Activated B cell treated with CpG ODN at 0.5 μM for 24 hours (primary cell): ENCODE measurements at regions of chr6 and their contacts with region 1.

Region 1: GRCh38 chr6:38570750-38571149 is 69.0 kb downstream of the BTBD9 start:
- DNase-seq: no peak
- ATAC-seq: no peak
- H3K4me3 Mint-ChIP-seq: no peak overlapping the region
- H3K27ac Mint-ChIP-seq: peak overlapping the region; percentile 92
- H3K4me1 Mint-ChIP-seq: peaks cover 27% of the 10 kb centered on the region
- H3K27me3 Mint-ChIP-seq: no peaks in the 10 kb centered on the region
- CTCF ChIP-seq: no peak

Region 2: DNA sequence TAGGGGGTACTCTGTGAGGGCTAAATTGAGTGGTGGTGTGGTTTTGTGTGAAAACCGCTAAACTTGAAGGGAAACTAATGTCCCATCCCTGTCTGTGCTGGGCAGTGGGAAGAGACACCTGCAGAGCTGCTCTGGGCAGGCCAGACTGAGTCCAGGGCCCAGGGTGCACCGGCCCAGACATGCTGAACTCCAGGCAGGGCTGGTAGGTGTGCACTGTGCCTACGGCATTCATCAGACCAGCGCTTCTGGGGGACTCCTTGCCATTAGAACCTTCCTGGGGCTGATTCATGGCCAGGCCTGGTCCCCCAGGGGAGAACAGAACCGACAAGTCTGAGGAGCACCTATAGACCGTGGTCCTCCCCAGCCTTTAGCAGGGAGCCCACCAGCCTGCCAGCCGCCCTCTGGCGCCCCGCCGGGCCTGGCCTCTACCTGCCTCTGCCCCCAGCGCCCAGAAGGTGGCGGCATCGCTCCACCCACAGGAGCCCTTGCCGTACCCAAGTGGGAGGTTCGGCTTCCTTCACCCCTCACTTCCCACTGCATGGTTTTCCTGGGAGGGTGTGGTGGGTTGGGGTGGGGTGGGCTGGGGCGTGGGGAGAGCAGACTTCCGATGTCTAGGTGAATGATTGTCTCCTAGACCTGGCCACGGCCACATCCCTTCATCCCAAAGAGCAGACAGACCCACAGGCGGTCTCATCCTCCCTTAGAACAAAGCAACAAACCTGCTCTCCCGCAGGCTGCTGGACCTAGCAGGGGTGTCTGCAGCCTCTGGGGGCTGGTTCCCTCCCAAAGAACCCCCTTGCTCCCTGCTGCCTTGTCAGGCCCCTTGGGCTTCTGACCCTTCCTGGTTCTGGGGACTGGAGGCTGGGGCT is 1086.6 kb before region 1 on chr6:
- CTCF ChIA-PET with region 1: interaction called, 3 read pairs
- POLR2A ChIA-PET with region 1: no interaction called
- intact Hi-C with region 1: loop called (anchors 1 kb)
- DNase-seq: peak; percentile 72
- ATAC-seq: peak; percentile 97
- H3K4me3 Mint-ChIP-seq: no peak overlapping the region
- H3K27ac Mint-ChIP-seq: no peak overlapping the region
- H3K4me1 Mint-ChIP-seq: peaks cover 3% of the 10 kb centered on the region
- H3K27me3 Mint-ChIP-seq: no peaks in the 10 kb centered on the region
- CTCF ChIP-seq: no peak

Region 3: DNA sequence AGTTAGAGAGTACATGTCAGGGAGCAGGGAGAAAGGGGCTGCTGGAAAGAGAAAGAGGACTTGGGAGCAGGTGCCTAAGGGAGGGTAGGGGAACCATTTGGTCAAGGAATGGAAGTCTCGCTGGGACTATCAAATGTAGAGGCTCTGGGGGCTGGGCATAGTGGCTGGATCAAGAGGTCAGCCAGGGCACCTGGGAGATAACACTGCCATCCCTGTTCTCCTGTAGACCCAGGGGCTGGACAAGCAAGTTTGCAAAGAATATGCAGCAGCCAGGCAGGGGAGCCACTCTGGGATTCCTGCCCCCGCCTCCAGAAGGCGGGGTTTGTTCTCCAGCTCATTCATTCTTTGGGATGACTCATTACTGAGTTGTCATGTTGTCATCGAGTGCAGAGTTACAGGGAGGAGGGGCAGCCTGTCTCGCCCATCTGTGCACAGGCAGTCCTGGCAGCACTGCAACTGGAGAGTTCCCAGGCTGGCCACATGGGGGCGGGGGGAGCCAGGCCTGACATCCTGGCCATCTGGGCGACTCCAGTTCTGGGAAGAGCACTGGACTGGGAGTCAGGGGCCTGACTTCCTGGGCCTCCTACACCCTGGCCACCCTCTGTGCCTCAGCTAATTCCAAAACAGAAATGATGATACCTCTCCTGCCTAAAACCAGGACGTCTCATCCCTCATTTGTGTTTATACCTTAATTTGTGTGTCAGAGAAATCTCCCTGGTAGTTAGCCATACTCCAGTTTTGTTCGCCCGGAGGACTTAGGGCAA is 779.4 kb before region 1 on chr6:
- CTCF ChIA-PET with region 1: interaction called, 3 read pairs
- POLR2A ChIA-PET with region 1: no interaction called
- intact Hi-C with region 1: loop called (anchors 2 kb)
- DNase-seq: peak; percentile 66
- ATAC-seq: peak; percentile 100
- H3K4me3 Mint-ChIP-seq: no peak overlapping the region
- H3K27ac Mint-ChIP-seq: no peak overlapping the region
- H3K4me1 Mint-ChIP-seq: peaks cover 7% of the 10 kb centered on the region
- H3K27me3 Mint-ChIP-seq: no peaks in the 10 kb centered on the region
- CTCF ChIP-seq: peak; percentile 73

Region 4: GRCh38 chr6:38493931-38494547 is 76.7 kb before region 1 on chr6:
- CTCF ChIA-PET with region 1: interaction called, 36 read pairs
- POLR2A ChIA-PET with region 1: interaction called, 8 read pairs
- intact Hi-C with region 1: loop called (anchors 1 kb)
- DNase-seq: peak; percentile 54
- ATAC-seq: peak; percentile 40
- H3K4me3 Mint-ChIP-seq: no peak overlapping the region
- H3K27ac Mint-ChIP-seq: no peak overlapping the region
- H3K4me1 Mint-ChIP-seq: peaks cover 6% of the 10 kb centered on the region
- H3K27me3 Mint-ChIP-seq: no peaks in the 10 kb centered on the region
- CTCF ChIP-seq: peak; percentile 98

Region 5: DNA sequence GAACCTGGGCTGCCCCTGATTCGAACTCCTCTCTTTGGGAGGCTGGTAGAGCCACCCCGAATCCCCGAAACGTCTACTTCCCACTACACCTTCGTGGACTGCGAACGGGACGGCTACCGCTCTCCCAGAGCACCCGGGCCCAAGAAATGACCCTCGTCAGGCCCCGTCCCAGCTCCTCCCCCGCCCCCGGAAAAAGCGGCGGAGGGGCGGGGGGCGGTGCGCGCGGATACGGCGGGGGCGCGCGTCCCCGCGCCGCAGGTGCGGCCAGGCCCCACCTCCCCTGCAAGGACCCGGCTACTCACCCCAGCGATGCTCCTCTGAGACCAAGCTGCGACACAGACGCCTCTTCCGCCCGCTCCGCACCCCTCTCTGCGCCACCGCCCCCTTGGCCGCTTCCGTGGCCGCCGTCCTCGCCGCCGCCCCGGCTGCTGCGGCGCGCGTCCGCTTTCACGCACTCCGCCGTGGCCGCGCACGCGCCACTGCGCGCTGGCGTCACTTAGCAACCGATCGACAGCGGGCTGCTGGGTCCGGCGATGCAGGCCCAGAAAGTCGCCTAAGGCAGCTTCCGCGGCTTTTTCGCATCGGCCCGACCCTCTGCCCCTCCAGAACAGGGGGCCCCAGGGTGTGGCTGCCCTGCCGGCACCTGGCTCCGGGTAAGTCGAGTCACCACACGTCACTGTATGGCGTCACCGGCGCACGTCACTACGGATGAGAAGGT is 68.9 kb after region 1 on chr6 and contains the start of gene BTBD9:
- CTCF ChIA-PET with region 1: no interaction called
- POLR2A ChIA-PET with region 1: interaction called, 6 read pairs
- intact Hi-C with region 1: loop called (anchors 2 kb)
- DNase-seq: peak; percentile 92
- ATAC-seq: peak; percentile 86
- H3K4me3 Mint-ChIP-seq: peak within 1 kb of the TSS; percentile 94
- H3K27ac Mint-ChIP-seq: peak within 1 kb of the TSS; percentile 95
- H3K4me1 Mint-ChIP-seq: peaks cover 31% of the 10 kb centered on the region
- H3K27me3 Mint-ChIP-seq: no peaks in the 10 kb centered on the region
- CTCF ChIP-seq: no peak
- total RNA-seq, gene BTBD9: 19.4 and 25.7 TPM in 2 replicates

Region 6: GRCh38 chr6:38813041-38813823 is 242.5 kb after region 1 on chr6:
- CTCF ChIA-PET with region 1: no interaction called
- POLR2A ChIA-PET with region 1: no interaction called
- intact Hi-C with region 1: no loop called
- DNase-seq: no peak
- ATAC-seq: no peak
- H3K4me3 Mint-ChIP-seq: no peak overlapping the region
- H3K27ac Mint-ChIP-seq: no peak overlapping the region
- H3K4me1 Mint-ChIP-seq: no peaks in the 10 kb centered on the region
- H3K27me3 Mint-ChIP-seq: peaks cover 2% of the 10 kb centered on the region
- CTCF ChIP-seq: no peak